ENCODE measurements at regions of chr7 and their contacts with region 1.

Region 1: DNA sequence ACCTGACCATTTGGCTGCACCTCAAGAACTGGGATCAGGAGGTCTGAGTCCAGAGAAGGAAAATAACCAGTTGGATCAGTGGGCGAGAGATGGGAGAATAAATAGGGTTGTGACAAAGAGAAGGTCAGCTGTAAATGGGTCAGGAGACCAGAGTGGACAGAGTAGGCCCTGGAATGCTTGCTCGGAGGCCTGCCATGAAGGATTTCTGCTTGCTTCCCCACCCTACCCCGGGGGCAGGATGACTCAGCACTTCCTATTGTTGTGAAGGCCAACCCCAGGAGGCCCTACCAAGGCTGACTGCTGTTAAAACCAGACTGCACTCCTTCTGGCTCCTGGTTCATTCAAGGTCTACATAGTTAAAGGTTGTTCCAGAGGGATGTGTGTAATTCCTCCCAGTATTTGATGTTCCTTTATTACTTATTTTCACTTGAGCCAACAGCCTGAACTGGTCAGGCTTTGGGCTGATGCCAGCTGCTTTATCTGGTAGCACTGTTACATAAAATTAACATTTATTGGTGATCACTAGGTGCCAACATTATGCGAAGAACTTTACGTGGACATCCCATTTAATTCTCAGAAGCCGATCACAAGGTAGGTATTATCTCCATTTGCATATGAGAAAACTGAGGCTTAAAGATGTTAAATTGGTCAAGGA is 27.3 kb upstream of the IFRD1 start:
- DNase-seq: peak in 4 of 9 experiments; percentile 6 to 51 (median 11)
- ATAC-seq: no peak
- H3K4me3 ChIP-seq: no peak overlapping the region
- H3K4me3 Mint-ChIP-seq: no peak overlapping the region
- H3K27ac ChIP-seq: no peak overlapping the region
- H3K27ac Mint-ChIP-seq: peak overlapping the region; percentile 76
- H3K4me1 ChIP-seq: peaks cover 19% of the 10 kb centered on the region
- H3K4me1 Mint-ChIP-seq: peaks cover 24% of the 10 kb centered on the region
- H3K27me3 ChIP-seq: no peaks in the 10 kb centered on the region
- H3K27me3 Mint-ChIP-seq: no peaks in the 10 kb centered on the region
- CTCF ChIP-seq: no peak

Region 2: DNA sequence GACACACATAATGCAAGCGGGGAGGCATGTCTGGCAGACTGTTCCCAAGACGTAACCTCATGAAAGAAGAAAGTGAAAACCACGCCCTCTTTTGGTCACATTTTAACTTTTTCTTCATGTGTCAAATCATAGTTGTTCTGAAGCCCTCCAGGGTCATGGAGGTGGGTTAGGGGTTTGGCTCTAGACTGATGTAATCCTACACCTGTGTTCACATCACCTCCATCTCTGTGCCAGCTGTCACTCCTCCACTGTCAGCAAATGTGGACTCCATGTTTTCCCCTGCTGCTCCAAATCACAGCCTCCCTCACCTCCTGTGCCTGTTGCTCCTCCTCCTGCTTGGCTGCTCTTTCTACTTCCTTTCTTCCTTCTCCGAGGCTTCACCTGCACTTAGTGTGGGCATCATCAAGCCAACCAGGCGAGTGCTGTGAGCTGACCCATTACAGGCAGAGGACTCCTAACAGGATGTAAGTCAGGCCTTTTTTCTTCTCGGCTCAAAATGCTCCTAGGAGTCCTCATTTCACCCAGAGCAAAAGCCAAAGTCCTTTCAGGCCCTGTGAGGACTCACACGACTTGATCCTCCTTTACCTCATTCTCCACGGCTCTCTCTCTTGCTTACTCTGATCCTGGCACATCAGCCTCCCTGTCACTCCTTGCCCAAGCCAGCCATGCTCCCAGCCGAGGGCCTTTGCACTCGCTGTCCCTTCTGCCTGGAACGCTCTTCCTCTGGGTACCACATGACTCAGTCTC is 39.1 kb before region 1 on chr7:
- CTCF ChIA-PET with region 1: no interaction called
- POLR2A ChIA-PET with region 1: no interaction called
- intact Hi-C with region 1: loop called in 1 of 2 experiments (anchors 2 kb)
- DNase-seq: peak in 2 of 9 experiments; percentile 34 to 47
- ATAC-seq: peak; percentile 48
- H3K4me3 ChIP-seq: no peak overlapping the region
- H3K4me3 Mint-ChIP-seq: no peak overlapping the region
- H3K27ac ChIP-seq: no peak overlapping the region
- H3K27ac Mint-ChIP-seq: no peak overlapping the region
- H3K4me1 ChIP-seq: peaks cover 6% of the 10 kb centered on the region
- H3K4me1 Mint-ChIP-seq: peaks cover 6% of the 10 kb centered on the region
- H3K27me3 ChIP-seq: no peaks in the 10 kb centered on the region
- H3K27me3 Mint-ChIP-seq: peaks cover 8% of the 10 kb centered on the region
- CTCF ChIP-seq: no peak

Measured in CD8-positive, alpha-beta T cell (primary cell).